ENCODE measurements at regions of chr7 and their contacts with region 1.

Region 1: GRCh38 chr7:74068393-74069085 is 15.1 kb upstream of the LIMK1 start:
- DNase-seq: no peak
- H3K4me3 ChIP-seq: no peak overlapping the region
- H3K27ac ChIP-seq: no peak overlapping the region
- H3K4me1 ChIP-seq: no peaks in the 10 kb centered on the region
- H3K27me3 ChIP-seq: no peaks in the 10 kb centered on the region
- CTCF ChIP-seq: no peak

Region 2: DNA sequence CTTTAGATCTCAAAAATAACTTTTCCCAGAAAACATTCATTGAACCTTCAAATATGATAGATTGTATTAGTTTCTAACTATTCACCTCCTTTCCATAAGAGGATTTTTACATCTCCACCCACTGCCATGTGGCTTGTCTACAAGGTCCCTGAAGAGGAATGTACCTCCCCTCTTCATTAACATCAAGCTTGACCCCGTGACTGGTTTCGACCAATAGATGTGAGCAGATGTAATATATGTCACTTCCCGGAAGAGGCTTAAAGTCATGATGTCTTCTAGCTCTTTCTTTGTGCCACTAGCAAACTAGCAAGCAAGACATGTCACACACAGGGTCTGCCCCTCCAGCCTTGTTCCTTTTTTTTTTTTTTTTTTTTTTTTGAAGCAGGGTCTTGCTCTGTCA is 553.4 kb before region 1 on chr7:
- CTCF ChIA-PET with region 1: no interaction called
- POLR2A ChIA-PET with region 1: no interaction called
- intact Hi-C with region 1: no loop called
- DNase-seq: peak; percentile 25
- H3K4me3 ChIP-seq: no peak overlapping the region
- H3K27ac ChIP-seq: no peak overlapping the region
- H3K4me1 ChIP-seq: peaks cover 17% of the 10 kb centered on the region
- H3K27me3 ChIP-seq: no peaks in the 10 kb centered on the region
- CTCF ChIP-seq: no peak

Region 3: DNA sequence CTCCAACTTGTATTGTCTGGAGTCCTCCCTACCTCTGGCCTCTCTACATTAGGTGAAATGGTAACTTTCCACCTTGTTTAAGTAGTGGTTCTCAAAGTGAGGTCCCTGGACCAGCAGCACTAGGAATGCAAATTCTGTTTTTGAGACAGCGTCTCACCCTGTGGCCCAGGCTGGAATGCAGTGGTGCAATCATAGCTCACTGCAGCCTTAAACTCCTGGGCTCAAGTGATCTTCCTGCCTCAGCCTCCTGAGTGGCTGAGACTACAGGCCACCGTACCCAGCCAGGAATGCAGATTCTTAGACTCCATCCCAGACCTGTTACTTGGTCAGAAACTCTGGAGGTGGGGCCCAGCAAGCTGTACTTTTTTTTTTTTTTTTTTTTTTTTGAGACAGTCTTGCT is 483.3 kb before region 1 on chr7:
- CTCF ChIA-PET with region 1: interaction called, 10 read pairs
- POLR2A ChIA-PET with region 1: no interaction called
- intact Hi-C with region 1: no loop called
- DNase-seq: no peak
- H3K4me3 ChIP-seq: no peak overlapping the region
- H3K27ac ChIP-seq: no peak overlapping the region
- H3K4me1 ChIP-seq: no peaks in the 10 kb centered on the region
- H3K27me3 ChIP-seq: no peaks in the 10 kb centered on the region
- CTCF ChIP-seq: no peak

Region 4: GRCh38 chr7:74164985-74165456 is 96.5 kb after region 1 on chr7:
- CTCF ChIA-PET with region 1: interaction called, 14 read pairs
- POLR2A ChIA-PET with region 1: no interaction called
- intact Hi-C with region 1: no loop called
- DNase-seq: no peak
- H3K4me3 ChIP-seq: no peak overlapping the region
- H3K27ac ChIP-seq: no peak overlapping the region
- H3K4me1 ChIP-seq: no peaks in the 10 kb centered on the region
- H3K27me3 ChIP-seq: no peaks in the 10 kb centered on the region
- CTCF ChIP-seq: peak; percentile 38

Region 5: GRCh38 chr7:74187915-74188630 is 119.5 kb after region 1 on chr7:
- CTCF ChIA-PET with region 1: no interaction called
- POLR2A ChIA-PET with region 1: no interaction called
- intact Hi-C with region 1: loop called (anchors 5 kb)
- DNase-seq: peak; percentile 66
- H3K4me3 ChIP-seq: no peak overlapping the region
- H3K27ac ChIP-seq: peak overlapping the region; percentile 65
- H3K4me1 ChIP-seq: peaks cover 43% of the 10 kb centered on the region
- H3K27me3 ChIP-seq: no peaks in the 10 kb centered on the region
- CTCF ChIP-seq: no peak

Measured in A673 (cell line).